Activated T-helper 2 cell treated with anti-CD3 and anti-CD28 coated beads, Interferon-gamma antibody, Interleukin-2, Interleukin-4, amounts not matched to agents 10 μg/mL and 5 μg/mL and 100 μg/mL, durations not matched to agents 14 hours and 24 hours and 36 hours (primary cell): ENCODE measurements at regions of chrX and their contacts with region 1.

Region 1: DNA sequence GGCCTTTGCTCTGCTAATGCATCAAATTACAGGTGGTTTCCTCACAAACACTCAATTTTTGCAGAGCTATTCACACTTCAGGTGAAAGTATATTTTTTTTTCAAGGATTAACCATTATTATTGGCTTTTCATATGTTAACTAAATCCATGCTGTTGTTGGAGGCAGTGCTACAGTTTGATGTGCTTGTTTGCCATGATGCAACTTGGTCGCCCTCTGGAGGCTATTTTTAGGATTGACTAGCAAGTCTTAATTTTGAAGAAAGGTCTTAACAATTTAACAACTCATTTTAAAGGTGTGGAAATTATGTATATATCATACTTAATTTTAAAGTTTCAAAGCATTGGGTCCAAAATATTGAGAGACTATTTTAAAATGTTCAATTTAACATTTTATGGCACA is 168.8 kb upstream of the FAM47A start:
- DNase-seq: no peak
- H3K4me3 Mint-ChIP-seq: no peak overlapping the region
- H3K27ac Mint-ChIP-seq: no peak overlapping the region
- H3K4me1 Mint-ChIP-seq: no peaks in the 10 kb centered on the region
- H3K27me3 Mint-ChIP-seq: no peaks in the 10 kb centered on the region

Region 2: GRCh38 chrX:33434256-33435092 is 866.4 kb before region 1 on chrX:
- intact Hi-C with region 1: loop called (anchors 5 kb)
- DNase-seq: peak; percentile 7
- H3K4me3 Mint-ChIP-seq: no peak overlapping the region
- H3K27ac Mint-ChIP-seq: no peak overlapping the region
- H3K4me1 Mint-ChIP-seq: no peaks in the 10 kb centered on the region
- H3K27me3 Mint-ChIP-seq: no peaks in the 10 kb centered on the region

Region 3: DNA sequence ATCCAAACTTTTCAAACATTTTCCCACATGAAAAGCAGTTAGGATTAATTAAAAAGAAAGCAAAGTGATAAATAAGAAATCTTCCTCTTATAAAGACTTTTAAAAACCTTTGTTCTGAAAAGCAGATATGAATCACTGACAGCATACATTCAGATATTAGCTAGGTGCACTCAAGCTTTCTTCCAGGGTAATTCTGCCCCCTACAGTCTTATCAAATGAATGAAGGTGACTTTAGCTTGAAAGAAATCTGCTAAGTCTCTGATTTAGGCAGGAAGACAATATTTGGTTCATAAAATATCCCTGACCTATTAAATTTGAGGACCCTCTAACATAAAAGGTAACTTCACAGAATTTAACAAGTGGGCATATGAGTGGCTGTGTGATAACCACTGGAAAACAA is 40.4 kb after region 1 on chrX:
- intact Hi-C with region 1: no loop called
- DNase-seq: no peak
- H3K4me3 Mint-ChIP-seq: no peak overlapping the region
- H3K27ac Mint-ChIP-seq: no peak overlapping the region
- H3K4me1 Mint-ChIP-seq: no peaks in the 10 kb centered on the region
- H3K27me3 Mint-ChIP-seq: no peaks in the 10 kb centered on the region

Region 4: DNA sequence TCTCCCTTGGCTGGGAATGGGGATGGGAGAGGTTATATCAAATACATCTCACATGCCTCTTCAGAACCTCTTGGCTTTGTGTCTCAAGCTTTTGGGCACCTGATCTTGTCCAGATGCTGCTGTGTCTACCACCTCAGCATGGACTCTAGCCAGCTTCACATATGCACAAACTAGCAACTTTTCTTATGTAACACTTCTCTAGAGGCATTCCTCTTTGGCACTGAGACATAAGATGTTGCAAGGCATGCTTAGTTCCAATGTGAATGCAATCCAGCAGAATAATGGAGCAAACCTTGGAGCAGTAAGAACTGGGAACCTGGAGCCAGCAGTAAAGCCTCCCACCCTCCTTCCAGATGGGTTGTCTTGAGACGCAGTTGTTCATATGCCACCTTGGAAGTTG is 469.6 kb after region 1 on chrX:
- intact Hi-C with region 1: no loop called
- DNase-seq: no peak
- H3K4me3 Mint-ChIP-seq: no peak overlapping the region
- H3K27ac Mint-ChIP-seq: no peak overlapping the region
- H3K4me1 Mint-ChIP-seq: no peaks in the 10 kb centered on the region
- H3K27me3 Mint-ChIP-seq: no peaks in the 10 kb centered on the region